ENCODE measurements at regions of chr7 and their contacts with region 1.

Region 1: GRCh38 chr7:27921081-27921836 is 181.3 kb downstream of the TAX1BP1 start:
- DNase-seq: no peak
- H3K4me3 ChIP-seq: peak overlapping the region in 27 of 59 donors; percentile 1 to 47 (median 22)
- H3K27ac ChIP-seq: no peak overlapping the region
- H3K27me3 ChIP-seq: no peaks in the 10 kb centered on the region
- CTCF ChIP-seq: peak; percentile 56 to 89 (median 75)

Region 2: GRCh38 chr7:27196287-27196767 is 724.9 kb before region 1 on chr7:
- intact Hi-C with region 1: loop called (anchors 5 kb)
- DNase-seq: peak; percentile 57 to 93 (median 80)
- H3K4me3 ChIP-seq: no peak overlapping the region
- H3K27ac ChIP-seq: no peak overlapping the region
- H3K27me3 ChIP-seq: peaks cover 13 to 98% (median 94%) of the 10 kb centered on the region in 45 donors
- CTCF ChIP-seq: peak; percentile 47 to 93 (median 78)

Region 3: DNA sequence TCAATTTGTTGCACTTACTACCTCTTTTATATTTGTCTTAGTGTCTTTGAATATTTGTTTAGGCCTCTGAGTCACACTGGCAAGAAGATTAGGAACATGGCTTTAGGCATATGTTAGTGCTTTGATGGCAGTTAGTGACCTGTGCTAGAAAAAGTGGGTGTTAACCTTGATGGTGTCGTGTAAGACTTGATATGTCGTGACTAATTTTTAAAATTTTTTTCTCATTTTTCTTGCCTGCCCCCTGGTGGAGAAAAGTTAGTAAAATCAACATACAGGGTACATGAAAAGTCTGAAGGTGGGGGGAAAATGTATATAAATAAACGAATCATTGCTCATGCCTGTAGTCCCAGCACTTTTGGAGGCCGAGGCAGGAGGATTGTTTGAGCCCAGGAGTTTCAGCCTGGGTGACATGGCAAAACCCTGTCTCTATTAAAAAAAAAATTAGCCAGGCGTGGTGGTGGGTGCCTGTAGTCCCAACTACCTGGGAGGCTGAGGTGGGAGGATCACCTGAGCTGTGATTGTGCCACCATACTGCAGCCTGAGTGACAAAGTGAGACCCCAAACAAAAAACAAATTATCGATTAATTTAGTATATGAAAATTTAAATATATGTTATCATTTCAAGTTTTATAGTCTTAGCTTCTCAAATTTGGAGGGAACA is 136.7 kb before region 1 on chr7:
- intact Hi-C with region 1: loop called in 1 of 2 experiments (anchors 10 kb)
- DNase-seq: no peak
- H3K4me3 ChIP-seq: no peak overlapping the region
- H3K27ac ChIP-seq: no peak overlapping the region
- H3K27me3 ChIP-seq: no peaks in the 10 kb centered on the region
- CTCF ChIP-seq: peak; percentile 38 to 74 (median 61)

Region 4: DNA sequence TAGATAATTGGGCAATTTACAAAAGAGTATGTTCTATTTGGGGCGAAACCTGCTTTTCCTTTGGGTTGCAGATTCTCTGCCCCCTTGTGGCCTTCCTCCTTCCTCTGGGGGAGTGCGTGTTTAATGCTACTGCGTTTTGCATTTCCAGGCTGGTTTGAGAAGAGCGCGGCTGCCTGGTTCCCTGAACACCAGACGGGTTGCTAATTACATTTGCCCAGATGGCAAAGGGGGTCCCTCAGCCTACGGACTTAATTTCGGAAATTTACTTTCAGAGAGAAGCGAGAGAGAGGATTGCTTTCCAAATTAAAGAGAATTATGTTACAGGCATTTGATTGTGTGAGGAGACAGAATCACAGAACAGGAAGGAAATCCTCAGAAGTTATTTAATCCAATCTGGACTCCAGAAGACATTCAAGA is 351.2 kb after region 1 on chr7:
- intact Hi-C with region 1: no loop called
- DNase-seq: peak; percentile 26 to 71 (median 58)
- H3K4me3 ChIP-seq: peak overlapping the region in 38 of 59 donors; percentile 2 to 56 (median 28)
- H3K27ac ChIP-seq: no peak overlapping the region
- H3K27me3 ChIP-seq: no peaks in the 10 kb centered on the region
- CTCF ChIP-seq: peak; percentile 22 to 82 (median 70)

Measured in dorsolateral prefrontal cortex (tissue), 120 donors.